Activated CD8-positive, alpha-beta memory T cell treated with anti-CD3 and anti-CD28 coated beads, Interleukin-2, amount 10 ng/mL, durations not matched to agents 7 days and 5 days (primary cell): ENCODE measurements at regions of chr10 and their contacts with region 1.

Region 1: DNA sequence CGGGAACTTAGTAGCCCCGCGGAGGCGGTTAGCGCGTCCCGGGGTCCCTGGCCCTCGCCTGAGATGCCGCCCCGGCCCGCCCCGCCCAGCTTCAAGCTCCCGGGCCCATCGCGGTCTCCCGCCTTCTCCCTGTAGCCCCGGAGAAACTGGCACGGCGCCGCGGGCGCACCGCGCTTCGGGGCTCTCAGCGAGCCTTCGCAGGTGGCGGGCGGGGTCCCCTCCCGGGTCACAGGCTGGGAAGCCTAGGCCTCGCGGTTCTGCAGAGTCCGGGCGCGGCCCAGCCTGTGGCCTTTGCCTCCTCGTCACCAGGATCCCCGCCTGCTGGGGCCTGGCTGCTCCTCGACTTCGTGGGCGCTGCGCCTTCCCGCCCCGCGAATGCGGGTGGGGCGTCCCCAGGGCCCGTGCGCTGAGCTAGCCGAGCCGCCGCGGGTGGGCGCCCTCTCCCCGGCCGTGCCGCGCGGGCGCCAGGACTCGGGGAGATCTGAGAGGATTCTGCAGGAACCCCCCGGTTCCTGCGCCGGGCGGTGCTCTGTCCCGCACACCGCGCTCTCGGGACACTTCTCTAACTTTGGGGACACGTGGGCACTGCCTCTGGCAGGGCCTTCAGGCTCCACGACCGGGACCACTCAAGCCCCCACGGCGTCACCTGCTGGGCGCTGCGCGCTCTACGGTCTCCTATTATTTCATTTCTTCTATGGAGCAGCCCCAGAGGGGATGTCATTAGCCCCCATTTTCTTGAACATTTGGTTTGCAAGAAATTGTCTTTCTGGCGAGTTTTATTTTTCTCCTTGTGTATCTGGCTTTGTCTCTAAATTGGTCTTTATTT is 682 bp upstream of the RGS10 start:
- DNase-seq: peak; percentile 83
- ATAC-seq: peak; percentile 28
- H3K4me3 Mint-ChIP-seq: peak overlapping the region; percentile 75
- H3K27ac Mint-ChIP-seq: peak overlapping the region; percentile 83
- H3K4me1 Mint-ChIP-seq: peaks cover 45% of the 10 kb centered on the region
- H3K27me3 Mint-ChIP-seq: peaks cover 18% of the 10 kb centered on the region

Region 2: DNA sequence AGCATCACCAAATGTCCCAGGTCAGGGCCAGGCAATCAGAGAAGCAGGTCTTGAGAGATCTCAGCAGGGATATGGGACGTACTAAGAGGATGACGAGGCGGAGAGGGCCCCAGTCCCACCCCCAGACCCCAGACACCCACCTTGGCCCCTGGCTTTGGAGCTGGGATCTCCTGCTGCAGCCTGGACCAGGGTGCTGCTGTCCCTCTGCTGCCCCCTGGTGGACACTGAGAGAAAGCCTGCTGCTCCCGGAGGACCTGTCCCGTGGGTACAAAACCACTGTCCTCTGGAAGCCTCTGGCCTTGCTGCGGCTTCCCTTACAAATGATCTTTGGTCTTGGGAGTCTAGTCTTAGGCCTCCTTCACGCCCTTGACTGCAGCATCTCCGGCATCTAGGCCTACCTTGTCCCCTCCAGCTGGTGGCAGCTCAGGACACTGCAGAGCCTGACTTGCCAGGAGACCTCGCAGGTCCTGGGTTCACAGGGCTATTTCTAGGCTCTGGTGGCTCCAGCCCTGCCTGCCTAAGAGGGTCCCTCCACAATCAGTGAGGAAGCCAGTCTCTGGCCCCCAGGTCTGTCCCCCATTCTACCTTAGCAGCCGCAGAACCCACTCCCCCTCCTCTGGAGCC is 97.8 kb before region 1 on chr10:
- CTCF ChIA-PET with region 1: interaction called, 19 read pairs
- DNase-seq: peak; percentile 87
- ATAC-seq: peak; percentile 85
- H3K4me3 Mint-ChIP-seq: no peak overlapping the region
- H3K27ac Mint-ChIP-seq: no peak overlapping the region
- H3K4me1 Mint-ChIP-seq: peaks cover 6% of the 10 kb centered on the region
- H3K27me3 Mint-ChIP-seq: no peaks in the 10 kb centered on the region

Region 3: DNA sequence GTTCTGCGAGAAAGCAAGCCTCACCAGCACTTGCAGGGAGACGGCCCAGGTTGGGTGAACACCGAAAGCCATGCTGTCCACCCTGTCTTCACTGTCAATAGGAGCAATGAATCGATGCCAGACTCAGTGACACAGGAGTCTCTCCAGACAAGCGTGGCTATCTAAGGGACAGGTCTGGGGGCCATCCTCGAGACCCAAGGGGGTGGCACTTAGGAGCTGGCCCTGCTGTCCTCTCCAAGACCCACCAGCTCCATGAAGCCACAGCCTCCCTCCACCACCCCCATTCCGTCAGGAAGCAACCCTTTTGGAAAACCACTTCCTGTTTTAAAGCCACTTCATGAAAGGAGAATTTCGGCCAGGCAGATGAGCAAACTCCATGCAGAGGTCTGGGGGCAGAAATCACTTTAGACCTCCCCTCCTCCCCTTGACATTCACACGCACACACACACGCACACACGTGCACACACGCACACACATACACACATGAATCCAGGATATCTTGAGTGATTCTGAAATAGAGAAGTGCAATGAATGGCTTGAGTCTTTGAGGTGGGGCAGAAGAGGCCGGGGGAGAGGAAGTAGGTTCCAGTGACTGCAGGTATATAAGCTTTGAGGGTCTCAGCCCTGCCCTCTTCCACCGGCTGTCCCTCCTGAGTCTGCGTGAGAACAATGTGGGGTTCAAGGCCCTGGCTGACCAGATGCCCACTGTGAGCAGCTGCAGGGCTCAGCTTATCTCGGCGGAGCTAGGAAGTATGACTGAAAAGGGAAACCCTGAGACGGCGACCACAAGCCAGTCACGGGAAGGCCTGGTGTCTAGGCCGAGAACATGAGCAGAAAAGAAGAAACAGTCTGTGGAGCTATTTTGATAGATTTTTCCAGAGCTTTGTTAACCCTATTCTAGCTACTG is 25.7 kb before region 1 on chr10:
- CTCF ChIA-PET with region 1: interaction called, 79 read pairs
- DNase-seq: peak; percentile 88
- ATAC-seq: peak; percentile 70
- H3K4me3 Mint-ChIP-seq: peak overlapping the region; percentile 59
- H3K27ac Mint-ChIP-seq: peak overlapping the region; percentile 91
- H3K4me1 Mint-ChIP-seq: peaks cover 47% of the 10 kb centered on the region
- H3K27me3 Mint-ChIP-seq: no peaks in the 10 kb centered on the region

Region 4: GRCh38 chr10:119596537-119597404 is 53.6 kb after region 1 on chr10 and contains the start of gene TIAL1:
- CTCF ChIA-PET with region 1: interaction called, 17 read pairs
- DNase-seq: peak; percentile 98
- ATAC-seq: peak; percentile 91
- H3K4me3 Mint-ChIP-seq: peak within 1 kb of the TSS; percentile 90
- H3K27ac Mint-ChIP-seq: peak within 1 kb of the TSS; percentile 96
- H3K4me1 Mint-ChIP-seq: peaks cover 40% of the 10 kb centered on the region
- H3K27me3 Mint-ChIP-seq: no peaks in the 10 kb centered on the region
- total RNA-seq, gene TIAL1: 181 to 191 TPM

Region 5: GRCh38 chr10:119845656-119846055 is 302.5 kb after region 1 on chr10:
- CTCF ChIA-PET with region 1: no interaction called
- DNase-seq: no peak
- ATAC-seq: no peak
- H3K4me3 Mint-ChIP-seq: no peak overlapping the region
- H3K27ac Mint-ChIP-seq: no peak overlapping the region
- H3K4me1 Mint-ChIP-seq: no peaks in the 10 kb centered on the region
- H3K27me3 Mint-ChIP-seq: no peaks in the 10 kb centered on the region